Activated T-helper 1 cell treated with anti-CD3 and anti-CD28 coated beads, Interleukin-12 subunit alpha, Interleukin-12 subunit beta, Interleukin-2, Interleukin-4 antibody, amounts not matched to agents 30 ng/mL and 10 ng/mL and 1 ng/mL, durations not matched to agents 14 hours and 24 hours and 36 hours (primary cell): ENCODE measurements at regions of chr14 and their contacts with region 1.

Region 1: GRCh38 chr14:64928239-64929013 is 14.1 kb downstream of the GPX2 start:
- DNase-seq: no peak
- H3K4me3 Mint-ChIP-seq: no peak overlapping the region
- H3K27ac Mint-ChIP-seq: no peak overlapping the region
- H3K4me1 Mint-ChIP-seq: peaks cover 25% of the 10 kb centered on the region
- H3K27me3 Mint-ChIP-seq: no peaks in the 10 kb centered on the region

Region 2: GRCh38 chr14:64906022-64906421 is 22.4 kb before region 1 on chr14:
- intact Hi-C with region 1: no loop called
- DNase-seq: no peak
- H3K4me3 Mint-ChIP-seq: no peak overlapping the region
- H3K27ac Mint-ChIP-seq: no peak overlapping the region
- H3K4me1 Mint-ChIP-seq: no peaks in the 10 kb centered on the region
- H3K27me3 Mint-ChIP-seq: peaks cover 35% of the 10 kb centered on the region

Region 3: GRCh38 chr14:64944041-64944440 is 15.6 kb after region 1 on chr14:
- intact Hi-C with region 1: loop called (anchors 1 kb)
- DNase-seq: no peak
- H3K4me3 Mint-ChIP-seq: no peak overlapping the region
- H3K27ac Mint-ChIP-seq: no peak overlapping the region
- H3K4me1 Mint-ChIP-seq: peaks cover 24% of the 10 kb centered on the region
- H3K27me3 Mint-ChIP-seq: no peaks in the 10 kb centered on the region

Region 4: DNA sequence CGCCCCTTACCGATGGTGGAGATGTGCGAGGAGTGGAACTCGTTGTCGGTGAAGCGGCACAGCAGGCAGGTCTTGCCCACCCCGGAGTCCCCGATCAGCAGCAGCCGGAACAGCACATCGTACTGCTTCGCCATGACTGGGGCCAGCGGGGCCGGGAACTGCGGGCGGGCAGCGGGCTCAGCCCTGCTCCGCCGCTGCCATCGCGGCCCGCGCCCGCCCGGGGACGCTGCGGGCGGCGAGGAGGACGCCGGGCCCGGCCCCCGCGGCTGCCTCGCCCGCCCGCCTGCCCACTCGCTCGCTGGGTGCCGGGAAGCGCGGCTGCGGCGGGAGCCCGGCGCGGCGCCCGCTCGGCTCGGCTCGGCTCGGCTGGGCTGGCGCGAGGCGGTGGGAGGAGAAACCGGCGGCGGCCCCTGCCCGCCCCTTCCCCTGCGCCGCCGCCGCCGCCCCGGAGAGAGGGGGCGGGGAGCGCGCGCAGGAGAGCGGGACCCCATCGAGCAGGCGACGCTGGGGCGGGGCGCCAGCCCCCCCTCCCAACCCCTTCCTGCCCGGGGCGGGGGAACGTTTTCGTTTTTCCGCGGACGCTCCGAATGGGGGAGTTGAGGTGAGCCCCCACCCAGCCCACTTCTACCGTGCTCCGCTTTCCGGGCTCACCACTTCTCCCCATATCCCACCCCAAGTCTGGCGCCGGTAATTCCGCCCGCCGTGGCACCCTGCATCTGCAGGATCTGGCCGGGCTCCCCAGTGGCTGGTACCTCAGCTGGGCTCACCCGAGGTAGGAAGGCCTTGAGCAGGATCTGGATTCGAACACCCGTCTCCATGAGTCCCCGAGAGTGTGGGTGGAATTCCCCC is 43.7 kb after region 1 on chr14 and contains the start of gene RAB15:
- intact Hi-C with region 1: loop called (anchors 5 kb)
- DNase-seq: peak; percentile 29
- H3K4me3 Mint-ChIP-seq: peak within 1 kb of the TSS; percentile 84
- H3K27ac Mint-ChIP-seq: peak within 1 kb of the TSS; percentile 71
- H3K4me1 Mint-ChIP-seq: no peaks in the 10 kb centered on the region
- H3K27me3 Mint-ChIP-seq: peaks cover 31% of the 10 kb centered on the region
- total RNA-seq, gene RAB15: 5.7 and 6.0 TPM in 2 replicates

Region 5: DNA sequence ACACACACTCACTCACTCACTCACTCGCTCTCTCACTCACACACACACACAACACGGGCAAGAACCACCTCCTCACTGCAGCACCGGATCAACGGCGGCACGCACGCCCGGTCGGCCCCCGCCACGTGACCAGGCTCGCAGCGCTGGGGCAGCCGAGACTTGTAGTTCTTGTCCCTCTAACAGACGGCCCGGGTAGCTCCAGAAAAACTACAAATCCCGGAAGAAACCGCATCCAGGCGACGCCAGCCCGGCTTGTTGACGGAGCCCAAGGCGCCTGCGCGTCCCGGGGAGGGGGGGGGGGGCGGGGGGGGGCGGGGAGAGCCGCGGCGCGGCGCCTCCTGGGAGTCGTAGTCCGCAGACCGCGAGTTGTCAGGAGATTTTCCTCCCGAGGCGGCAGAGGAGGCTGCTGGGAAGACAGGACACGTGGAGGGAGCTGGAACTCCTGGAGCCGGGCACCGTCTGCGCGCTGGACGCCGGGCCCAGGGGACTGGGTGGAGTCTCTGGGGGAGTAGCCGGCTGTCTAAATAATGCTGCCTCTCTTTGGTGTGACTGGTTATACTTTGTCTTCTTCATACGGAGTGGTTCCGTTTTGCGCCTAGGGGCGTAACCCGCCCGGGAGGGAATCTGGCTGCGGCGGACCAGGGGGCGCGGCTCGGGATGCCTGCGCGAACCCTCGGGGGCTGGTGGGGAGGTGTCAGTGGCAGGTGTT is 174.2 kb after region 1 on chr14 and contains the start of gene MAX:
- intact Hi-C with region 1: loop called (anchors 5 kb)
- DNase-seq: peak; percentile 98
- H3K4me3 Mint-ChIP-seq: peak within 1 kb of the TSS; percentile 95
- H3K27ac Mint-ChIP-seq: peak within 1 kb of the TSS; percentile 95
- H3K4me1 Mint-ChIP-seq: peaks cover 33% of the 10 kb centered on the region
- H3K27me3 Mint-ChIP-seq: peaks cover 6% of the 10 kb centered on the region
- total RNA-seq, gene MAX: 135 and 137 TPM in 2 replicates